Caco-2 (cell line): ENCODE measurements at regions of chr7 and their contacts with region 1.

Region 1: GRCh38 chr7:7911371-7912155 is 57.0 kb upstream of the GLCCI1 start:
- DNase-seq: peak; percentile 75 to 84
- H3K4me3 ChIP-seq: no peak overlapping the region
- H3K4me3 Mint-ChIP-seq: no peak overlapping the region
- H3K27ac Mint-ChIP-seq: peak overlapping the region; percentile 87
- H3K4me1 ChIP-seq: peaks cover 41% of the 10 kb centered on the region
- H3K4me1 Mint-ChIP-seq: peaks cover 18% of the 10 kb centered on the region
- H3K27me3 ChIP-seq: no peaks in the 10 kb centered on the region
- H3K27me3 Mint-ChIP-seq: no peaks in the 10 kb centered on the region
- CTCF ChIP-seq: no peak

Region 2: GRCh38 chr7:7922728-7923385 is 11.3 kb after region 1 on chr7:
- CTCF ChIA-PET with region 1: no interaction called
- POLR2A ChIA-PET with region 1: no interaction called
- intact Hi-C with region 1: loop called (anchors 1 kb)
- DNase-seq: peak in 1 of 2 experiments; percentile 34
- H3K4me3 ChIP-seq: no peak overlapping the region
- H3K4me3 Mint-ChIP-seq: peak overlapping the region; percentile 29
- H3K27ac Mint-ChIP-seq: peak overlapping the region; percentile 18
- H3K4me1 ChIP-seq: peaks cover 28% of the 10 kb centered on the region
- H3K4me1 Mint-ChIP-seq: peaks cover 25% of the 10 kb centered on the region
- H3K27me3 ChIP-seq: no peaks in the 10 kb centered on the region
- H3K27me3 Mint-ChIP-seq: no peaks in the 10 kb centered on the region
- CTCF ChIP-seq: no peak

Region 3: GRCh38 chr7:7968543-7969305 is 57.2 kb after region 1 on chr7 and contains the start of gene GLCCI1:
- CTCF ChIA-PET with region 1: interaction called, 3 read pairs
- POLR2A ChIA-PET with region 1: interaction called, 10 read pairs
- intact Hi-C with region 1: loop called (anchors 1 kb)
- DNase-seq: peak; percentile 98
- H3K4me3 ChIP-seq: peak within 1 kb of the TSS; percentile 82
- H3K4me3 Mint-ChIP-seq: peak within 1 kb of the TSS; percentile 27
- H3K27ac Mint-ChIP-seq: peak within 1 kb of the TSS; percentile 31
- H3K4me1 ChIP-seq: no peaks in the 10 kb centered on the region
- H3K4me1 Mint-ChIP-seq: peaks cover 6% of the 10 kb centered on the region
- H3K27me3 ChIP-seq: no peaks in the 10 kb centered on the region
- H3K27me3 Mint-ChIP-seq: no peaks in the 10 kb centered on the region
- CTCF ChIP-seq: no peak
- total RNA-seq, gene GLCCI1: 18.8 and 19.3 TPM in 2 replicates

Region 4: GRCh38 chr7:8236780-8237407 is 325.3 kb after region 1 on chr7:
- CTCF ChIA-PET with region 1: no interaction called
- POLR2A ChIA-PET with region 1: no interaction called
- intact Hi-C with region 1: loop called (anchors 1 kb)
- DNase-seq: no peak
- H3K4me3 ChIP-seq: no peak overlapping the region
- H3K4me3 Mint-ChIP-seq: no peak overlapping the region
- H3K27ac Mint-ChIP-seq: no peak overlapping the region
- H3K4me1 ChIP-seq: peaks cover 15% of the 10 kb centered on the region
- H3K4me1 Mint-ChIP-seq: peaks cover 29% of the 10 kb centered on the region
- H3K27me3 ChIP-seq: no peaks in the 10 kb centered on the region
- H3K27me3 Mint-ChIP-seq: no peaks in the 10 kb centered on the region
- CTCF ChIP-seq: peak in 1 of 2 experiments; percentile 5